Activated T-helper 1 cell treated with anti-CD3 and anti-CD28 coated beads, Interleukin-12 subunit alpha, Interleukin-12 subunit beta, Interleukin-2, Interleukin-4 antibody, amounts not matched to agents 30 ng/mL and 10 ng/mL and 1 ng/mL, durations not matched to agents 14 hours and 24 hours and 36 hours (primary cell): ENCODE measurements at regions of chr14 and their contacts with region 1.

Region 1: GRCh38 chr14:91060351-91061055 is at the start of gene RPS6KA5:
- DNase-seq: peak; percentile 100
- H3K4me3 Mint-ChIP-seq: peak within 1 kb of the TSS; percentile 84
- H3K27ac Mint-ChIP-seq: peak within 1 kb of the TSS; percentile 40
- H3K4me1 Mint-ChIP-seq: peaks cover 62% of the 10 kb centered on the region
- H3K27me3 Mint-ChIP-seq: no peaks in the 10 kb centered on the region
- total RNA-seq, gene RPS6KA5: 16.6 and 16.7 TPM in 2 replicates

Region 2: DNA sequence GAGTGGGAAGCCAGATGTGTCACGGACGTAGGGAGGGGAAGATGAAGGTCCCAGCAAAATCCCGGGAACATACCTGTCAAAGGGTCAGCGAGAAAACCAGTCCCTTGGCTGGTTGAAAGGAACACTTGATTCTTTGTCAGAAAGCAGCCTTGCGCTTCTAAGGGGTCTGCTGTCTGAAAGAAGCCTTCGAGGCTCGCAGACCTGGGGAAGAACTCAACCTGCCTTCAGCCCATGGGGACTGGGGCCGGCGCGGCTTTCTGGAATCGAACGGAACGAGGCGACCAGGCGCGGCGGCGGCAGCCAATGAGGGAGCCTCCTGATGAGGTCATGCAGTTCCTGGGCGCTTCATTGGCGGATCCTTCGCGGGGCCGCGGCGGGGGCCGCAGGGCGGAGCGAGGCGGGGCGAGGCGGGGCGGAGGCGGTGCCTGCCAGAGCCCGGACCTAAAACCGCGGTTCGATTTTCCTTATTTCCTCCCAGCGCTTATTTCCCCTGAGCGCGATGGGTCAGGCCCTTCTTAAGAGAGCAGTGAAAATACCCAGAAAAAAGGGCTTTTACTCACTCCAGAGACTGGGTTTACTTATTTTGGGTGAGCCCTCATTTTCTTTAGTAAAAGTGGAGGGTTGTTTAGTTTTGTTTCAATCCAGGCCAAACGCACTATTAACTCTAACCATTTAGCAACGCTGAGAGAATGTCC is 232.4 kb before region 1 on chr14:
- intact Hi-C with region 1: loop called (anchors 1 kb)
- DNase-seq: peak; percentile 91
- H3K4me3 Mint-ChIP-seq: peak overlapping the region; percentile 76
- H3K27ac Mint-ChIP-seq: peak overlapping the region; percentile 88
- H3K4me1 Mint-ChIP-seq: peaks cover 28% of the 10 kb centered on the region
- H3K27me3 Mint-ChIP-seq: peaks cover 5% of the 10 kb centered on the region

Region 3: GRCh38 chr14:91038438-91038837 is 22.1 kb before region 1 on chr14:
- intact Hi-C with region 1: loop called (anchors 1 kb)
- DNase-seq: no peak
- H3K4me3 Mint-ChIP-seq: no peak overlapping the region
- H3K27ac Mint-ChIP-seq: no peak overlapping the region
- H3K4me1 Mint-ChIP-seq: peaks cover 73% of the 10 kb centered on the region
- H3K27me3 Mint-ChIP-seq: no peaks in the 10 kb centered on the region

Region 4: GRCh38 chr14:91127401-91127854 is 66.9 kb after region 1 on chr14:
- intact Hi-C with region 1: no loop called
- DNase-seq: no peak
- H3K4me3 Mint-ChIP-seq: no peak overlapping the region
- H3K27ac Mint-ChIP-seq: no peak overlapping the region
- H3K4me1 Mint-ChIP-seq: peaks cover 15% of the 10 kb centered on the region
- H3K27me3 Mint-ChIP-seq: no peaks in the 10 kb centered on the region

Region 5: GRCh38 chr14:91138511-91139359 is 78.2 kb after region 1 on chr14:
- intact Hi-C with region 1: loop called (anchors 2 kb)
- DNase-seq: peak; percentile 42
- H3K4me3 Mint-ChIP-seq: no peak overlapping the region
- H3K27ac Mint-ChIP-seq: peak overlapping the region; percentile 61
- H3K4me1 Mint-ChIP-seq: peaks cover 57% of the 10 kb centered on the region
- H3K27me3 Mint-ChIP-seq: no peaks in the 10 kb centered on the region

Region 6: DNA sequence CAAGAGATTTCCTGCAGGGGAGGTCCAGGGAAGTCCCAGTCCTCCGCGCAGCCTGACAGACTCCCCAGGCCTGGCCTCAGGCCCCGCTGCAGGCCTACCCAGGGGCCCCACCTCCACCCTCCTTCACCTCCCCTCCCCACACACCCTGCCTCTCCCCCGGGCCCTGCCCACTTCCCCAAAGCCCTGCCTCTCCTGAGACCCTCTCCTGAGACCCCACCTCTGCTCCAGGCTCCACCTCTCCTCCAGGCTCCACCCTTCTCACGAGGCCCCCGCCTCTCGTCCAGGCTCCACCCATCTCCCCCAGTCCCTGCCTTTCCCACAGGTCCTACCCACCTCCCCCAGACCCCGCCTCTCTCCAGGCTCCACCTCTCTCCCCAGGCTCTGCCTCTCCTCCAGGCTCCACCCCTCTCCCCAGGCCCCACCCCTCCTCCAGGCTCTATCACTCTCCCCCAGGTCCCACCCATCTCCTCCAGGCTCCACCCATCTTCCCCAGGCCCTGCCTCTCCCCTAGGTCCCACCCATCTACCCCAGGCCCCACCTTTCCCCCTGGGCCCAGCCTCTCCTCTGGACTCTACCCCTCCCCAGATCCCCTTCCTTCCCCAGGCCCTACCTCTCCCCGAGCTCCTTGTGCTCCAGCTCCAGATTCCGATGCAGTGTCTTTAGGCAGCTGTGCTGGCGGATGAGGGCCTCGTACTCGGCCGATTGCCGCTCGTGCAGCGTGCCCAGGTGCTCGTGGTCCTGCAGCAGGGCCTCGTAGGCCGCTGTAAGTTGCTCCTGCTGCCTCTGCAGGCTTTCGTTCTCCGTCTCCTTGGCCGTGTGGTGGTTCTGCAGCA is 242.8 kb after region 1 on chr14:
- intact Hi-C with region 1: loop called (anchors 5 kb)
- DNase-seq: peak; percentile 36
- H3K4me3 Mint-ChIP-seq: peak overlapping the region; percentile 63
- H3K27ac Mint-ChIP-seq: peak overlapping the region; percentile 98
- H3K4me1 Mint-ChIP-seq: peaks cover 72% of the 10 kb centered on the region
- H3K27me3 Mint-ChIP-seq: no peaks in the 10 kb centered on the region

Region 7: GRCh38 chr14:92106143-92106926 is 1045.8 kb after region 1 on chr14 and contains the start of gene ATXN3:
- intact Hi-C with region 1: loop called (anchors 5 kb)
- DNase-seq: peak; percentile 93
- H3K4me3 Mint-ChIP-seq: peak within 1 kb of the TSS; percentile 99
- H3K27ac Mint-ChIP-seq: peak within 1 kb of the TSS; percentile 97
- H3K4me1 Mint-ChIP-seq: peaks cover 42% of the 10 kb centered on the region
- H3K27me3 Mint-ChIP-seq: no peaks in the 10 kb centered on the region
- total RNA-seq, gene ATXN3: 27.3 and 27.5 TPM in 2 replicates